ENCODE measurements at regions of chr19 and their contacts with region 1.

Region 1: GRCh38 chr19:54179921-54180461 is 7.0 kb upstream of the TMC4 start:
- DNase-seq: peak; percentile 80

Region 2: GRCh38 chr19:53671663-53672062 is 508.3 kb before region 1 on chr19:
- intact Hi-C with region 1: no loop called
- DNase-seq: no peak

Region 3: DNA sequence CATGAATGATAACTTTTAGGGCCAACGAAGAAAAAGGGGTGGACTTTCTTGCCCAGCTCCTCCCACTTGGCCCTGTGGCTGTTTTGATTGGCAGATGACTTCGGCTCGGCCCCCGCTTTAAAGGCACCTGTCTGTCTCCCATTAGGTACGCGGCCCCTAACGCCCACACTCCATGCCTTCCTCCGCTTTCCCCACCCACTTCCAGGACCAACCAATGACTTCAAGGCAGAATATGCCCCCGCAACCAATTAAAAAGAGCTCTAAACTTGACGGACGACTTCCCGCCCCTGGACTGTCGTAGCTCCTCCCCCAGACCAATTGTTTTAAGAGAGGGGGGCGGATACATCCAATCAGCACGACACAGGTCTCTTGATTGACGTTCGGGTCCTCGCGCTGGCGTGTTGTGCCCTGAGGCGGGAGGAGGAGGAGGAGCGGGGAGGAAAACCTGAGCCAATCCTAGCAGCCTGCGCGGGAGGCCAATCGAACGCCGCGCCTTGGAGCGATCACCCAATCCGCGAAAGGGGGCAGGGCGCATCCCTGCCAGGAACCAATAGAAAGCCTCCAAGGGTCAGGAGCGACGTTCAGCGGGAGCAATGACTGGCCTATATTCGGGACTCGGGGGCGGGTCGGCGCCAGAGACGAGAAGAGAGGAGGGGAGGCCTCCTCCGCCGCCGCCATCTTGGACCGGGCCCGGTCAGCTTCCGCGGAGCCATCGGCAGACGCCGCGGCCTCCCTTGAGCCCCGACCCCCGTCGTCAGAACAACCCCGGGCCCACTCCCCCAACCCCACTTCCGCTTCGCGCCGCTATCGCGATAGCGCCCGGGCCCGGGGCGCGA is 42.7 kb before region 1 on chr19 and contains the start of gene CNOT3:
- intact Hi-C with region 1: no loop called
- DNase-seq: peak; percentile 100
- total RNA-seq, gene CNOT3: 25.6 to 29.1 TPM

Region 4: GRCh38 chr19:54147676-54148075 is 32.3 kb before region 1 on chr19:
- intact Hi-C with region 1: no loop called
- DNase-seq: no peak

Region 5: DNA sequence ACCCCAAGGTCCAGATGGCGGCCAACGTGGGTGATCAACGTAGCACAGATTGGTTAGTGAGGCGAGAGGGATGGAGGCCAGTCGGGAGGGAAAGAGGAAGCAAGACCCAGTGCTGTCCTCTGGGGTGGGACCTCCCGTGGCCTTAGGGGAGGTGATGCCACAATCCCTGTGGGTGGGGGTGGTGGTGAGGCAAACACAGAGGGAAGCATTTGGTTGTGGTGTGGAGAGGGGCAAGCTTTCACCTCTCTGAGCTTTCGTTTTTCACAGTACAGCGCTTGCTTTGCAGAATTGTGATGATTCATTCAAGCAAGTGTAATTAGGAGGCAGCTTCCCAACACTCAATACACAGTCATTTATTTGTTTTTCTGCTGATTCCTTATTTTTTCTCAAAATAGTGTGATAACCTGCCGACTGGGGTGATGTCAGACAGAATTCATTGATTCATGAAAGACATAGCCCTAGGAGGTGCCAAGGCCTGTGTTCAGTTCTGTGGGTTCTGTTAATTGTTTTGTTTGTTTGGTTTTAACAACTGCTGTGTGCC is 271.4 kb after region 1 on chr19:
- intact Hi-C with region 1: loop called in 1 of 2 experiments (anchors 10 kb)
- DNase-seq: no peak